GM10248 (cell line): ENCODE measurements at regions of chr21 and their contacts with region 1.

Region 1: GRCh38 chr21:29221253-29221744 is 77.4 kb upstream of the BACH1 start:
- DNase-seq: no peak
- CTCF ChIP-seq: no peak

Region 2: GRCh38 chr21:29195981-29196669 is 25.2 kb before region 1 on chr21:
- CTCF ChIA-PET with region 1: interaction called, 11 read pairs
- POLR2A ChIA-PET with region 1: no interaction called
- DNase-seq: peak; percentile 82
- CTCF ChIP-seq: peak; percentile 50

Region 3: GRCh38 chr21:29205009-29205408 is 16.3 kb before region 1 on chr21:
- CTCF ChIA-PET with region 1: interaction called, 11 read pairs
- POLR2A ChIA-PET with region 1: no interaction called
- DNase-seq: no peak
- CTCF ChIP-seq: no peak

Region 4: DNA sequence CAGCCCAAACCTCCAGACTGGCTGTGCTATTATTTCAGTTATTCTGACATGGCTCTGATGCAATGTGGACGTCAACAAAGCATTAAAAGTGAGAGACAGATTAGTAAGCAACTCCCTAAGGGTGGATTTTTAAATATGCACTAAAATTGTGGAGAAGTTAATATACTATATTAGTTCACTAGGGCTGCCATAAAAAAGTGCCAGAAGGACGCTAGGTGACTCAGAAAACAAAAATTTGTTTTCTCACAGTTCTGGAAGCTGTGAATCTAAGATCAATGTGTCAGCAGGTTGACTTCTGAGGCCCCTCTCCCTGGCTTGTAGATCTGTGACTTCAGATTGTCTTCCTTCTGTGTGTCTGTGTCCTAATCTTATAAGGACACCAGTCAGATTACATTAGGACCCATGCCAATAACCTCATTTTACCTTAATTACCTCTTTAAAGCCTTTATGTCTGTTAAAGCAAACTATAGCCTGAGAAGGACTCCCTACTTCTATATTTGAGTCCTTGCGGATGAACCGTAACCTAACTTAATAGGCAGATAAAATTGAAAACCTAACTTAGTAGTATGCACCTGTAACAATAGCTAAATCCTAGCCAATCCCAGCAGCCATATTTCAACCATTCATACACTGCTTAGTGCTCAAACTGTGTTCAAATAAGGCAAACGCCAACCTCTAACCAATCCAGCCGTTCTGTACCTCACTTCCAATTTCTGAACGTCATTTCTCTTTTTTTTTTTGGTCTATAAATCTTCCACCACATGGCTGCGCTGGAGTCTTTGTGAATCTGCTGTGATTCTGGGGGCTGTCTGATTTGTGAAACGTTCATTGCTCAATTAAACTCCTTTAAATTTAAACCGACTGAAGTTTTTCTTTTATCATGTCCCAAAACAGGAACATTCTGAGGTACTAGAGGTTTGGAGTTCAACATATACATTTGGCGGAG is 11.6 kb after region 1 on chr21:
- CTCF ChIA-PET with region 1: interaction called, 26 read pairs
- POLR2A ChIA-PET with region 1: interaction called, 3 read pairs
- DNase-seq: no peak
- CTCF ChIP-seq: no peak

Region 5: GRCh38 chr21:29384683-29385322 is 163.5 kb after region 1 on chr21:
- CTCF ChIA-PET with region 1: no interaction called
- POLR2A ChIA-PET with region 1: no interaction called
- DNase-seq: no peak
- CTCF ChIP-seq: no peak